Activated CD8-positive, alpha-beta T cell treated with anti-CD3 and anti-CD28 coated beads for 36 hours (primary cell): ENCODE measurements at regions of chr14 and their contacts with region 1.

Region 1: DNA sequence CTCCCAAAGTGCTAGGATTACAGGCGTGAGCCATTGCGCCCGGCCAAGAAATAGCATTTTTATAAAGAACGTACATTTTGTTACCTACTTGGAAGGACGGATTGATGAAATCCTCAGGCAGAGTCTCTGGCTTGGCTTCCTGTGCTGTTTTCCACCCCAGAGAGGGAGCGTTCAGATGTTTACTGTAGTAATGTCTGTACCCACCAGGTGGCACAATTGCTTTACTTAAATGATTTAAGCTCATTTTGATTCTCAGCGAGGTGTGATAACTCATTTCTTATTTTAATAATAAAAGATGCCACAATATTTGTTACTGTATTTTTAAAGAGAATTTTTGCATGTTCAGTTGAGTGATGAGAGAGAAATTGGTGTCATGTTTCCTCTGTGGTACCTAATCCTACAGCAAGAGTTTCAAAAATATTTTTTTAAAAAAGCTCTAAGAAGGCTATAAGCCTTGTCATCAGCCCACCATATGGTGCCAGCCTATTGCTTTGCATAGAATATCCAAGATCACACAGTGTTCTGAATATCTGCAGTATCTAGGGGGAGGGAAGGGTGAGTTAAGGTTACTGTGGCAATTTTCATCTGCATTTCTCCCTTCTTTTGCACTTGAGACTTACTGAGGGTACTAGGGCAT is 82.6 kb upstream of the TRAF3 start:
- DNase-seq: peak; percentile 77
- ATAC-seq: peak; percentile 82
- H3K4me3 Mint-ChIP-seq: no peak overlapping the region
- H3K27ac Mint-ChIP-seq: no peak overlapping the region
- H3K4me1 Mint-ChIP-seq: peaks cover 22% of the 10 kb centered on the region
- H3K27me3 Mint-ChIP-seq: no peaks in the 10 kb centered on the region
- CTCF ChIP-seq: peak; percentile 81

Region 2: DNA sequence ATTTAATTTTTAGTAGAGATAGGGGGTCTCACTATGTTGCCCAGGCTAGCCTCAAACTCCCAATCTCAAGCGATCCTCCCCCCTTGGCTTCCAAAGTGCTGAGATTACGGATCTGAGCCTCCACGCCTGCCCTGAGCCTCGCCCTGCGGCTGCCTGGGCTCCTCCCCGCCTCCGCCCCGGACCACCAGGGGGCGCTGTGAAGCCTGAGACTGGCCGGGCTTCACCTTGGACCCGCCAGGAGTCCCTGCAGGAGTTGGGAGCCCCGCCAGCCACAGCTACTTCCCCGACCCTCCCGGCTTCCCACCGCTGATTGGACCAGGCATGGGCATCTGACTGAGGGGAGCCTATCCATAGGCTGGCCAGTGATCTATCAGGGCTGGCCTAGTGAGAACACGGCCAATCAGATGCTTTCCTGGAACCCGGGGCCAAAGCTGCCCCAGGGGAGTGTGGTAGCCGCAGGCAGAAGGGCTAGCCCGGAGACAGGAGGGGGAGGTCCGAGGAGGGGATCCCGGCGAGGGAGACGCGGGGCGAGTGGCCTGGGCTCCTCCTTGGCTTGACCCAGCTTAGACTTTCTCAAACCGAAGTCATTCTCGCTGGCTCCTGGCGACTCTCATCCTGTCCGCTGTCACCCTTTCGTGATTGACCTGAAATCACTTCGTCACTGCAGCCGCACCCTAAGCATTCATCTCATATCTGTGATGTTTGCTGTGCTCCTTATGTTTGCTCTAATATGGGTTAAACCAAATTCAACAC is 170.0 kb before region 1 on chr14:
- CTCF ChIA-PET with region 1: interaction called, 19 read pairs
- POLR2A ChIA-PET with region 1: no interaction called
- intact Hi-C with region 1: no loop called
- DNase-seq: peak; percentile 98
- ATAC-seq: peak; percentile 98
- H3K4me3 Mint-ChIP-seq: peak overlapping the region; percentile 79
- H3K27ac Mint-ChIP-seq: peak overlapping the region; percentile 75
- H3K4me1 Mint-ChIP-seq: peaks cover 28% of the 10 kb centered on the region
- H3K27me3 Mint-ChIP-seq: no peaks in the 10 kb centered on the region
- CTCF ChIP-seq: peak; percentile 93

Region 3: GRCh38 chr14:102708494-102708893 is 13.8 kb after region 1 on chr14:
- CTCF ChIA-PET with region 1: interaction called, 13 read pairs
- POLR2A ChIA-PET with region 1: no interaction called
- intact Hi-C with region 1: no loop called
- DNase-seq: no peak
- ATAC-seq: no peak
- H3K4me3 Mint-ChIP-seq: no peak overlapping the region
- H3K27ac Mint-ChIP-seq: no peak overlapping the region
- H3K4me1 Mint-ChIP-seq: no peaks in the 10 kb centered on the region
- H3K27me3 Mint-ChIP-seq: no peaks in the 10 kb centered on the region
- CTCF ChIP-seq: no peak

Region 4: DNA sequence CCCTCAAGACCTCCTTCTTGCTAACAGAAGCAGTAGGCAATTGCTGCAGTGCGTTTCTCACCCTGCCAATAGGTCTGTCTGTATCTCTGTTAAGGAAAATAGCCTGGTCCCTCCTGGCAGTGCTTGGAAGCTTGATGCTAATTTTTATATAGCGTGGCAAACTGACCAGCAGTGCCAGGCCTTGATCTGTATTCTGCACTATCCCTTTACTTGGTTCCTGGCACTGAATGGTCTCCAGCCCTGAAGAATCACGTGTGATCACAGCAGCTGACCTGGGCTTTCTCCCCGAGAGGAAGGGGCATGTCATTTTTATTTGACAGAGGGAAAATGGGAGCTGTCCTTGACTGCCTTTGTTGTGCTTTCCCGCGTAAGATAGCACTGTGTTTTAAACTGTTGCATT is 33.9 kb after region 1 on chr14:
- CTCF ChIA-PET with region 1: interaction called, 14 read pairs
- POLR2A ChIA-PET with region 1: no interaction called
- intact Hi-C with region 1: no loop called
- DNase-seq: no peak
- ATAC-seq: no peak
- H3K4me3 Mint-ChIP-seq: no peak overlapping the region
- H3K27ac Mint-ChIP-seq: no peak overlapping the region
- H3K4me1 Mint-ChIP-seq: no peaks in the 10 kb centered on the region
- H3K27me3 Mint-ChIP-seq: no peaks in the 10 kb centered on the region
- CTCF ChIP-seq: no peak

Region 5: DNA sequence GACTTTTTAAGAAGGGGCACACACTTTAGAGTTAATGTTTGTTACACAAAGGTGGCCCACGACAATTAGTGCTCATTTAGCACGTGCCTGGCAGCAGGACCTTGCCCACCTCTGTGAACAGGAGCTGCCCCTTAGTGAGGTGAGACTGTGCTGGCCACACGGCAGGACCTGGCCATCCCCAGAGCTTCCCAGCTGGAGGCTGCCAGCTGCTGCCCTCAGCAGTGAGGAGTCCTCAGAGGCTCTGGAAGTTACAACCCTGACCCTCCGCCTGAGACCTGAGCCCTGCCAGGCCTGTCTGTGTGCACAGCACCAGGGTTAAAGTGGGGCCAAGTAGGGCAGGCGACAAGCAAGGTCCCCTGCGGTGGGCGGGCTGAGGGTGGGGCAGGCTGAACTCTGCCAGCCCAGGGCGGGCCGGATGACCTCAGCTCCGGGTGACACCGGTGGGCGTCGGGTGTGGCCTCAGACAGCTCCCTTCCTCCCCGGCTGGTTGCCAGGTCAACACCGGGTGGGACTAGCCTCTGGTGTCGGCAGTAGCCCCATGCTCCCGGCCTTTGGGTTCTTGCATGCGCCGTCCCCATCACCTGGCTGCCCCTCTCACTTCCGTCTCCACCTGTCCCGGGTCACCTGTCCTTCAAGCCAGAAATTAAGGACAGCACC is 380.2 kb after region 1 on chr14:
- CTCF ChIA-PET with region 1: interaction called, 11 read pairs
- POLR2A ChIA-PET with region 1: no interaction called
- intact Hi-C with region 1: no loop called
- DNase-seq: peak; percentile 68
- ATAC-seq: peak; percentile 21
- H3K4me3 Mint-ChIP-seq: no peak overlapping the region
- H3K27ac Mint-ChIP-seq: no peak overlapping the region
- H3K4me1 Mint-ChIP-seq: no peaks in the 10 kb centered on the region
- H3K27me3 Mint-ChIP-seq: peaks cover 4% of the 10 kb centered on the region
- CTCF ChIP-seq: no peak

Region 6: DNA sequence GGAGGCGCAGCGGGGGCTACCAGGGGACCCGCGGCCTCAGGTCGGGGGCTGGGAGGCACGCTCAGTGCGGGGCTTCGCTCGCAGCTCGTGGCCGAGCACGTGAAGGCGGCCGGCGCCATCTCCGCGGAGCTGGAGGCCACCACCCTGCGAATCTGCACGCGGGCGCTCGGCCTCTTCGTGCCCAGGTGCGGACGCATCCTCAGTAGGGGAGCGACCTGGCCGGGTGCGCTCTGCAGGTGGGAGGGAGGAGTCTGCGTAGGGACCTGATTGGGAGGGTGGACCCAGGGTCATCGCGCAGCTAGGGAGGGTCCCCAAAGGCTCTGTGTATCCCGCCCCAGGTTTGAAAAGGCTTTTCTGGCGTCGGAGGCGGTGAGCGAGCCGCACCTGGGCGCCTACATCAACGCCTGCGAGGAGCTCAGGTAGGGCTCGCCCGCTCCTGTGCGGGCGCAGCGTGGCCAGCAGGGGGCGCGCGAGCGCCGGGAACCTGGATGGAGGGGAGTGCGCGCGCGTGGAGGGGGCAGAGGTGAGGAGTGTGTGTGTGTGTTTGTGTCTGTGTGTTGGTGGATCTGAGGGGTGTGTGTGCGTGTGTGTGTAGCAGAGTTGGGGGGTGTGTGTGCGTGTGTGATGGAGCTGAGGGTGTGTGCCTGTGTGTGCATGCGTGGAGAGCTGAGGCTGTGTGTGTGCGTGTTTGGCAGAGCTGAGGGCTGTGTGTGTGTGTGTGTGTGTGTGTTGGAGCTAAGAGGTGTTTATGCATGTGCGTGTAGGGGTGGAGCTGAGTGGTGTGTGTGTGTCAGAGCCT is 410.2 kb after region 1 on chr14:
- CTCF ChIA-PET with region 1: interaction called, 13 read pairs
- POLR2A ChIA-PET with region 1: no interaction called
- intact Hi-C with region 1: no loop called
- DNase-seq: peak; percentile 74
- ATAC-seq: peak; percentile 80
- H3K4me3 Mint-ChIP-seq: no peak overlapping the region
- H3K27ac Mint-ChIP-seq: no peak overlapping the region
- H3K4me1 Mint-ChIP-seq: peaks cover 6% of the 10 kb centered on the region
- H3K27me3 Mint-ChIP-seq: peaks cover 22% of the 10 kb centered on the region
- CTCF ChIP-seq: peak; percentile 87